ENCODE measurements at regions of chr14 and their contacts with region 1.

Region 1: DNA sequence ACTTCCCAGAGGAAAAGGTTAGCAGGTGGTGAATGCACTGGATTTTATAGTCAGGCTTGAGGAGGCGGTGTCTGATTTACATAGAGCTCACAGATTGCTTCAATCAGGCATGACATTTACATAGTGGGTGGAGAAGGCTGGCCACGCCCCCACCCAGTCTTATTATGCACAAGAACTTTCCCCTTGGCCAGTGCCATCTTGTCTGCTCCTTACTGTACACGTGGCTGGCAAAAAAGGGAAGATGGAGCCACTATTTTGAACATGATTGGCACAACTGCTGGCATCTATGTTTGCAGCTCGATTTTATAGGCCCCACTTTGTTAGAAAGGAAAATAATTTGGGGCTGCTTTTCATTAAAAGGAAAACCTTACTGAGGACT is 10.9 kb upstream of the LGMN start:
- DNase-seq: no peak
- ATAC-seq: no peak
- H3K4me3 ChIP-seq: no peak overlapping the region
- H3K4me3 Mint-ChIP-seq: no peak overlapping the region
- H3K27ac ChIP-seq: no peak overlapping the region
- H3K27ac Mint-ChIP-seq: no peak overlapping the region
- H3K4me1 ChIP-seq: peaks cover 3% of the 10 kb centered on the region in 2 donors
- H3K4me1 Mint-ChIP-seq: peaks cover 18% of the 10 kb centered on the region
- H3K27me3 ChIP-seq: no peaks in the 10 kb centered on the region
- H3K27me3 Mint-ChIP-seq: no peaks in the 10 kb centered on the region
- CTCF ChIP-seq: no peak

Region 2: DNA sequence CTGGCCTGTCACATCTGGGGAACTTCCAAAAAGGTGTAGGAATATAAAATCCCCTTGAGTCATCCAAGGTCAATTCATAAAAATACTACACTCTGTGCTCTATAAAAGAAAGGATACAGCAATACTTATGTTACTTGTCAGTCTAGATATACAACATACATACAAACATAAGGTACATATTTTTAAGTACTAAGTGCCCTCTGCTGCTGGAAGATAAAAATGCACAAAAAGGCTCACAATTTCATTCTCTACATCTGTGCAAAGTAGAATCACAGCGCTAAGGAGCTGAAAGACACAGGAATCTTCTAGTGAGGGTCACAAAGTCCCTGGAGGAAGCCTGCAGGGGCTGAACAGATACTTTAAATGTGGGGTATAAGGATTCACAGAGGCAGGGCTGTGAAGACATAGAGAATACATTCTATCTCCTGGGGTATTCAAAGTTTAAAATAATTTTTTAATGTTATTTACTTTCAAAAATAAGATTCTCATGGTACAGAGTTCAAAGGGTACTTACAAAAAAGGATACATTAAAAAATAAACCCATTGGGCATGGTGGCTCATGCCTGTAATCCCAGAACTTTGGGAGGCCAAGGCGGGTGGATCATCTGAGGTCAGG is 24.6 kb after region 1 on chr14:
- CTCF ChIA-PET with region 1: interaction called, 22 read pairs
- POLR2A ChIA-PET with region 1: no interaction called
- intact Hi-C with region 1: no loop called
- DNase-seq: peak; percentile 80
- ATAC-seq: peak; percentile 77
- H3K4me3 ChIP-seq: no peak overlapping the region
- H3K4me3 Mint-ChIP-seq: no peak overlapping the region
- H3K27ac ChIP-seq: no peak overlapping the region
- H3K27ac Mint-ChIP-seq: no peak overlapping the region
- H3K4me1 ChIP-seq: peaks cover 3 to 6% of the 10 kb centered on the region in 2 donors
- H3K4me1 Mint-ChIP-seq: peaks cover 15% of the 10 kb centered on the region
- H3K27me3 ChIP-seq: no peaks in the 10 kb centered on the region
- H3K27me3 Mint-ChIP-seq: no peaks in the 10 kb centered on the region
- CTCF ChIP-seq: peak; percentile 83

Measured in B cell (primary cell).